T-cell (primary cell): ENCODE measurements at regions of chr1 and their contacts with region 1.

Region 1: DNA sequence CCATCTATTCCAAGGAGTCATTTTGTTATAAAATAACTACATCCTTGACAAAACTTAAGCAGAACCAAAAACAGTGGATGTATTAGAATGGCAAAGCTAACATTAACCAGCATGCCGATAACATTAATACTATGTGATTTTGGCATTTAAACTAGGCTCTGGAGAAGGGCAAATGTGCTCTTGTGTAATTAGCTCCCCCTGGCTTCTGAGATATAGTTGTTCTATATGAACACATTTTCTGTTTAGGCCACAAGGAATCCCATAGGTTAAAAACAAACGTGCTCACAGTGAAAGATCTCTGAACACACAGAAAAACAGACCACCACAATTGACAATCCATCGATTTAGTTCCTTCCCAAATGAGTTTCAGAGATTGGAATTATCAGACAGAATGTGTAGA is 57.4 kb upstream of the TARS2 start:
- DNase-seq: peak in 1 of 35 experiments; percentile 37
- ATAC-seq: peak in 2 of 4 experiments; percentile 47 to 50
- H3K4me3 ChIP-seq: no peak overlapping the region
- H3K4me3 Mint-ChIP-seq: no peak overlapping the region
- H3K27ac ChIP-seq: no peak overlapping the region
- H3K27ac Mint-ChIP-seq: peak overlapping the region; percentile 39 to 67
- H3K4me1 ChIP-seq: no peaks in the 10 kb centered on the region
- H3K4me1 Mint-ChIP-seq: peaks cover 17 to 23% (median 19%) of the 10 kb centered on the region in 3 donors
- H3K27me3 ChIP-seq: no peaks in the 10 kb centered on the region
- H3K27me3 Mint-ChIP-seq: no peaks in the 10 kb centered on the region

Region 2: GRCh38 chr1:150449451-150449850 is 19.6 kb after region 1 on chr1:
- CTCF ChIA-PET with region 1: no interaction called
- POLR2A ChIA-PET with region 1: no interaction called
- DNase-seq: no peak
- ATAC-seq: no peak
- H3K4me3 ChIP-seq: no peak overlapping the region
- H3K4me3 Mint-ChIP-seq: no peak overlapping the region
- H3K27ac ChIP-seq: no peak overlapping the region
- H3K27ac Mint-ChIP-seq: peak overlapping the region in 1 of 2 donors; percentile 45
- H3K4me1 ChIP-seq: no peaks in the 10 kb centered on the region
- H3K4me1 Mint-ChIP-seq: peaks cover 6 to 16% (median 8%) of the 10 kb centered on the region in 3 donors
- H3K27me3 ChIP-seq: no peaks in the 10 kb centered on the region
- H3K27me3 Mint-ChIP-seq: no peaks in the 10 kb centered on the region

Region 3: GRCh38 chr1:150464422-150464826 is 34.6 kb after region 1 on chr1:
- CTCF ChIA-PET with region 1: interaction called in 1 of 2 experiments, 12 read pairs
- POLR2A ChIA-PET with region 1: no interaction called
- DNase-seq: peak; percentile 9 to 84 (median 64)
- ATAC-seq: peak; percentile 66 to 85 (median 72)
- H3K4me3 ChIP-seq: no peak overlapping the region
- H3K4me3 Mint-ChIP-seq: no peak overlapping the region
- H3K27ac ChIP-seq: no peak overlapping the region
- H3K27ac Mint-ChIP-seq: peak overlapping the region; percentile 8 to 49
- H3K4me1 ChIP-seq: no peaks in the 10 kb centered on the region
- H3K4me1 Mint-ChIP-seq: peaks cover 4 to 7% (median 4%) of the 10 kb centered on the region in 3 donors
- H3K27me3 ChIP-seq: no peaks in the 10 kb centered on the region
- H3K27me3 Mint-ChIP-seq: no peaks in the 10 kb centered on the region

Region 4: DNA sequence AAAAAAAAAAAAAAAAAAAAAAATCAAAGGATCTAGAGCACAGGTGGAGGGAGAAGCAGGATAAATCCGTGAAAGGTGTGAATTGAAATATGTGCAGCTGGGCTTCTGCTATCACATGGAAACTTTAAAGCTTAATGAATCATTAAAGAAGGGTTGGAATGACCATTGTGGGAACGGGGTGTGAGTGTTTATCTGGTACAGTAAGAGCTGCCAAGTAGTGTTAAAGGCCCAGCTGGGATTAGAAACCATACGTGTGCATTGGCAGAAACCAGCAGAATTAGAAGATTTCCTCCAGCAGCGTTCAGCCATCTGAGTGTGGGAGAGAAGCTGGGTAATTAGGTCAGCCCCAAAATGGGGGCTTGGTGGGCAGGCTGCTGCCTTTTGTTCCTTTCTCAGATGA is 99.2 kb after region 1 on chr1:
- CTCF ChIA-PET with region 1: no interaction called
- POLR2A ChIA-PET with region 1: interaction called in 1 of 2 experiments, 11 read pairs
- DNase-seq: no peak
- ATAC-seq: no peak
- H3K4me3 ChIP-seq: no peak overlapping the region
- H3K4me3 Mint-ChIP-seq: no peak overlapping the region
- H3K27ac ChIP-seq: no peak overlapping the region
- H3K27ac Mint-ChIP-seq: no peak overlapping the region
- H3K4me1 ChIP-seq: no peaks in the 10 kb centered on the region
- H3K4me1 Mint-ChIP-seq: peaks cover 0 to 6% (median 3%) of the 10 kb centered on the region in 3 donors
- H3K27me3 ChIP-seq: peaks cover 0 to 3% of the 10 kb centered on the region in 2 experiments
- H3K27me3 Mint-ChIP-seq: no peaks in the 10 kb centered on the region